ENCODE measurements at regions of chr3 and their contacts with region 1.

Region 1: DNA sequence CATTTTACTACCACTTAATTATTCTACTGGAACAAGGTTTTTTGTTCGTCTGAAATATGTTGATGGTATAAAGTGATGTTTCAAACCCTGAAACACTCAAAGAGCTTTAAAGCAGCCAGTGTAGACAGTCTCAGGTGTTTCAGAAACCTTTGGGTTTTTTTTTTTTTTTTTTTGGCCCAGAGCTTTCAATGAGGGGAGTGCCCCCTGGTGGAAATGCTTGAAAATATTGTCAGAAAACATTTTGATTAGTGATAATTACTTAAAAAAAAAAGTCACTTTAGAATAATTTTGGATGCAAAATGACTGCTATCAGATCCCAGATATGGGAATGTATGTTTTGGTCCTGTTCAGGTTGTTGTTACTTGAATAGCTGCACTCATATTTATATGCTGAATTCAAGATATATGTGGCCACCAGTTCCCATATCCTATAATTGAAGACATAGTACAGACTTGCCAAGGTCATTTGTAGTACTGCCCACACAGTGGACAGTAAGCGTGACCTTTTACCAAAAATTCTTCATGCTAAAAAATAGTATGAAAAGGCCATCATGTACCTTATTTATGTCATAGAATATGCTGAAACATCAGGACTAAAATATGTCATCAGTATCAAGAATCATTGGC is 35.9 kb downstream of the SATB1 start:
- DNase-seq: no peak
- H3K4me3 Mint-ChIP-seq: no peak overlapping the region
- H3K27ac Mint-ChIP-seq: no peak overlapping the region
- H3K4me1 Mint-ChIP-seq: peaks cover 81% of the 10 kb centered on the region
- H3K27me3 Mint-ChIP-seq: no peaks in the 10 kb centered on the region

Region 2: DNA sequence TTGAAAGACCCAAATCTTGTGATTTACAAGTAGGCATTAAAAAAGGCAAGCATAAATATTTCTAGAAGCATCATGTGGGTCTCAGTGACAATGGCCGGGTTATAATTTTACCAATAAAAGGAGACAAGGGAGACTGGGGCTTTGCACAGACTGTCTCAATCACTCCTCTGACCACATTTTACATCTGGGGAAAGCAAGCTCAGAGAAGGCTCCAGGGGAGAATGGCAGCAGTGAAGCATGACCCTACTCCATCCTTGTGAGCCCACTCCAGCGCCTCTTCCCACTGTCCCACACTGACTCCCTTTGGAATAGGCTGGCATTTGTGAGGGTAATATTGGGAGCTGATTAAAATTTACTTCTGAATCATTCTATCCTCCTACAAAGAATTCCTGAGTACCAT is 25.9 kb before region 1 on chr3:
- intact Hi-C with region 1: no loop called
- DNase-seq: no peak
- H3K4me3 Mint-ChIP-seq: no peak overlapping the region
- H3K27ac Mint-ChIP-seq: peak overlapping the region; percentile 14
- H3K4me1 Mint-ChIP-seq: peaks cover 67% of the 10 kb centered on the region
- H3K27me3 Mint-ChIP-seq: no peaks in the 10 kb centered on the region

Region 3: DNA sequence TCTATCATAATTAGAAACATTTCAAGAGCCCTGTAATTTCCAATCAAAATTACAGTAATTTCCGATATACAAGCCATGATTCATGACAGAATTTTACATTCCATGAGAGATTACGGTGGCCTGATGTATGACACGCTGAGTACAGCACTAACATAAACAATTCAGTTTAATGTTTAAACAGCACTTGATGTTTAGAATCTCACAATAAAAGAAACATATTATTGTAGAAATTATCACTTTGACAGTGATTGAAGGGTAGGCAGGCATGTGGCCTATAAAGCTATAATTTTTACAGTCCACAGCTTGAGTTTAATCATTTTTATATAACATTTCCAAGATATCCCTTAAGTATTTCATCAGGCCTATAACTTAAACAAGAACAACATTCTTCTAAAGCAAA is 12.5 kb before region 1 on chr3:
- intact Hi-C with region 1: loop called (anchors 1 kb)
- DNase-seq: no peak
- H3K4me3 Mint-ChIP-seq: no peak overlapping the region
- H3K27ac Mint-ChIP-seq: peak overlapping the region; percentile 29
- H3K4me1 Mint-ChIP-seq: peaks cover 94% of the 10 kb centered on the region
- H3K27me3 Mint-ChIP-seq: no peaks in the 10 kb centered on the region

Region 4: GRCh38 chr3:18401300-18401961 is 12.2 kb after region 1 on chr3:
- intact Hi-C with region 1: loop called (anchors 1 kb)
- DNase-seq: no peak
- H3K4me3 Mint-ChIP-seq: peak overlapping the region; percentile 73
- H3K27ac Mint-ChIP-seq: peak overlapping the region; percentile 83
- H3K4me1 Mint-ChIP-seq: peaks cover 100% of the 10 kb centered on the region
- H3K27me3 Mint-ChIP-seq: no peaks in the 10 kb centered on the region

Region 5: DNA sequence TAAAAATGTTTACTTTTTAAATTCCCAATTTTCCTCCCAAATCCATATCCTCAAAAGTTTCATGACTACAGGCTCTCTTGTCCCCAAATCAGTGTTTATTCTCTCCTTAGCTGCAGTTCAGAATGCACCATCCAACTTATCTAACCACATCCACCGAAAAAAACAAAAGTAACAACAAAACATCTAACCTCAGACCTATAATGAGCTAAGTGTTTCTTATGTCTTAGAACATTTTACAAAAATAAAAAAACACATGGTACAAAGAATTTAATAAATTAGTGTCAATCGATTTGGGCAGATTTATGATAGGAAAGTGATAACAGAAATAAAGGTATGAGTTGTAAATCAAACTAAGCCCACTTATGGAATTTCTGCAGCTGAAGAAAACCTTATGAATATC is 22.3 kb after region 1 on chr3:
- intact Hi-C with region 1: loop called (anchors 2 kb)
- DNase-seq: no peak
- H3K4me3 Mint-ChIP-seq: peak overlapping the region; percentile 63
- H3K27ac Mint-ChIP-seq: peak overlapping the region; percentile 87
- H3K4me1 Mint-ChIP-seq: peaks cover 89% of the 10 kb centered on the region
- H3K27me3 Mint-ChIP-seq: no peaks in the 10 kb centered on the region

Region 6: GRCh38 chr3:18424729-18425640 is 35.8 kb after region 1 on chr3 and contains the start of gene SATB1:
- intact Hi-C with region 1: loop called (anchors 5 kb)
- DNase-seq: peak; percentile 54
- H3K4me3 Mint-ChIP-seq: peak within 1 kb of the TSS; percentile 91
- H3K27ac Mint-ChIP-seq: peak within 1 kb of the TSS; percentile 94
- H3K4me1 Mint-ChIP-seq: peaks cover 72% of the 10 kb centered on the region
- H3K27me3 Mint-ChIP-seq: peaks cover 6% of the 10 kb centered on the region
- total RNA-seq, gene SATB1: 679 and 686 TPM in 2 replicates

Region 7: GRCh38 chr3:18649666-18650363 is 260.6 kb after region 1 on chr3:
- intact Hi-C with region 1: no loop called
- DNase-seq: peak; percentile 70
- H3K4me3 Mint-ChIP-seq: peak overlapping the region; percentile 59
- H3K27ac Mint-ChIP-seq: peak overlapping the region; percentile 94
- H3K4me1 Mint-ChIP-seq: peaks cover 94% of the 10 kb centered on the region
- H3K27me3 Mint-ChIP-seq: no peaks in the 10 kb centered on the region